WTC11 (cell line): ENCODE measurements at regions of chr2 and their contacts with region 1.

Region 1: DNA sequence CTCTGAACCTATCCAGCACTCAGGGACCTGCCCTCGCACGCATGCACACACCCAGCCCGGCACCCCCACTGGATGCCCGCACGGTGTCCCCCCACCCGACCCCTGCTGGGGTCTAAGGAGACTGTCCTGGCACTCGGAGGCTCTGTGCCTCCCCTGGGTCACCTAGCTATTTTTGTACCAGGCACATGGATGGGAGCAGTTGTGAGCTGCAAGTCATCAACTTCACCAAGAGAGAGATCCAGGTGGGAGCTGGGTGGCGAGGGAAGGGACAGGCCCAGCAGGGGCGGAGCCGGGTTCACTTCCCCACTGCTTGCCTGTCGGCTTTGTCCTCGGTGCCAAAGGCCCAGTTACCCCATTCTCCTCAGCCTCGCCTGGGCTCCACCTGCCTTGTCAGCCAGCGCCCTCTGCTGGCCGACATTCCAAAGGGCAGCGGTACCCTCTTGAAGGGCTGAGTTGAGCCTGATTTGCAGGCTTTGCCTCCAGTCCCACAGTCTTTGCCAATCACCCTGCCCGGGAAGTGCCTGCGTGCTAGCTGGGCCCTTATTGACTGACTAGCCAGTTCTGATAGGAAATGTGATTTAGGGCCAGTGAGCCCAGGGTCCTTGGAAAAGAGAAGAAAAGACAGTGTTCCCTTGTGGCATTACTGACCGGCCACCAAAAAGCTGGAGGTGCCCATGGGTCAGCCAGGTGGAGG is 5.8 kb downstream of the NT5DC4 start:
- DNase-seq: peak; percentile 95
- ATAC-seq: peak; percentile 93
- H3K4me3 Mint-ChIP-seq: no peak overlapping the region
- H3K27ac Mint-ChIP-seq: no peak overlapping the region
- H3K4me1 Mint-ChIP-seq: peaks cover 8% of the 10 kb centered on the region; the same call in 1 of the 2 replicates
- H3K27me3 Mint-ChIP-seq: no peaks in the 10 kb centered on the region
- CTCF ChIP-seq: peak; percentile 87

Region 2: GRCh38 chr2:112584134-112584890 is 142.3 kb before region 1 on chr2 and contains the start of gene CHCHD5:
- CTCF ChIA-PET with region 1: interaction called, 18 read pairs
- POLR2A ChIA-PET with region 1: no interaction called
- DNase-seq: peak; percentile 90
- ATAC-seq: peak; percentile 88
- H3K4me3 Mint-ChIP-seq: peak within 1 kb of the TSS; percentile 89
- H3K27ac Mint-ChIP-seq: peak within 1 kb of the TSS; percentile 99
- H3K4me1 Mint-ChIP-seq: peaks cover 13% of the 10 kb centered on the region
- H3K27me3 Mint-ChIP-seq: no peaks in the 10 kb centered on the region
- CTCF ChIP-seq: no peak
- total RNA-seq, gene CHCHD5: 33.2 to 36.5 TPM (median 33.7 TPM) in 3 replicates

Region 3: GRCh38 chr2:112614201-112614840 is 112.3 kb before region 1 on chr2:
- CTCF ChIA-PET with region 1: interaction called, 16 read pairs
- POLR2A ChIA-PET with region 1: no interaction called
- DNase-seq: peak; percentile 63
- ATAC-seq: peak; percentile 98
- H3K4me3 Mint-ChIP-seq: peak overlapping the region; percentile 33; the same call in 1 of the 2 replicates
- H3K27ac Mint-ChIP-seq: no peak overlapping the region
- H3K4me1 Mint-ChIP-seq: peaks cover 22% of the 10 kb centered on the region
- H3K27me3 Mint-ChIP-seq: peaks cover 19% of the 10 kb centered on the region
- CTCF ChIP-seq: no peak

Region 4: DNA sequence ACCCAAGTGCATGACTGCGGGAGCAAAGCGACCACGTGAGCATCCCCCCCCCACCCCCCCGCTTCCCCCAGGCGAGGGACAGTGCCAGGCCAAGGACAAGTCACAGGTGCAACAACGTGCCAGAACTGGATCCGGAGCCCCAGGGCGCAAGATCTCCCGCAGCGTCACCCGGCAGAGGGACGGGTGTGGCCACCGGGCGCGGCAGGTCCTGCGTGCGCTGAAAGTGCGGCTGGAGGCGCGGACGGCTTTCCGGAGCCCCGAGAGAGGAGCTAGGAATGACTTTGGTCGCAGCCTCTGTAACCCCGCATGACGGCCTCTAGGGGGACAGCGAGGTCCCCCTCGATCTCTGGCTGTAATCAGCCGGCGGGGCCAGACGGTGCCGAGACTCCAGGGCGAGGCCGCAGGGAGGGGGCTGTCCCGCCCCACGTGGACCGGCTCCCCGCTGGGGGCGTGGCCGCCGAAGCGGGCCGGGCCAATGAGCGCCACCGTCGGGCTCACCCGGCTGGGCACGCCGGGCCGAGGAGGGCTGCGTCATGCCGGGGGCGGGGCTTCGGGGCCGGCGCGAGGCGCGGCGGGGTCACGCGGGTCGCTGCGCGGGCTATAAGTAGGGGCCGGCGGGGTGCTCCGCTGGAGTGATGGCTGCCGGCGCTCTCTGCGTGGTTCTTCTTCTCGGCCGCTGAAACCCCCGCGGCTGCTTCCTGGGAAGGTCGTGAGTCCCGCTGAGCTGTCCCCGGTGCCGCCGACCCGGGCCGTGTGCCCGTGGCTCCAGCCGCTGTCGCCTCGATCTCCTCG is 81.1 kb before region 1 on chr2 and contains the start of gene SLC20A1:
- CTCF ChIA-PET with region 1: interaction called, 38 read pairs
- POLR2A ChIA-PET with region 1: interaction called, 3 read pairs
- DNase-seq: peak; percentile 96
- ATAC-seq: peak; percentile 95
- H3K4me3 Mint-ChIP-seq: peak within 1 kb of the TSS; percentile 84
- H3K27ac Mint-ChIP-seq: peak within 1 kb of the TSS; percentile 87
- H3K4me1 Mint-ChIP-seq: peaks cover 30% of the 10 kb centered on the region
- H3K27me3 Mint-ChIP-seq: peaks cover 17% of the 10 kb centered on the region
- CTCF ChIP-seq: peak; percentile 73
- total RNA-seq, gene SLC20A1: 59.9 to 64.4 TPM (median 60.1 TPM) in 3 replicates

Region 5: DNA sequence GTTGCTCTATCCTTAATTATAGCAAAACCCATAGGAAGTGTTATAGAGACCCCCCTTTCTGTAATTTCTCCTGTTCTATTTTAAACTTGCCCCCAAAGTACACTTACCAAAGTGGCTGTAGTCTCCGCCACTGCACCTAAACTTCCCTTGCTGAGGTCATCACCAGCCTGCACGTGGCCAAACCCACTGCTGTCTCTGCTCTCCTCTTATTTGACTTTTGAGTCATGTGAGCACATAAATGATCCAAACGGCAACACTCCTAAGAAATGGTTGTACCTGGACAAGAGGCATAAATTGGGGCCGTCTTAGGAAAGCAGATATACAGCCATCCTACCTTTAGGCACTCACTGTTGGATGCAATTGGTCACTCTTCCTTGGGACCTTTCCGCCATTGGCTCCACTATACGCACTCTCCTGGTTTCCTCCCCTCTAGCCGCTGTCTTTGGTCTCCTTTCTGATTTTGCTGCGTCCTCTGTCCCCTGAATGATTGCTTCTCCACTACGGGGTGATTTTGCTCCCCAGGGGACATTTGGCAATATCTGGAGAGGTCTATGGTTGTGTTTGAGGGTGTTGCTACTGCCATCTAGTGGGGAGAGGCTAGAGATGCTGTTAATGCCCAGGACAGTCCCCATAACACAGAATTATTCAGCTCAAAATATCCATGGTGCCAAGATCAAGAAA is 231.9 kb after region 1 on chr2:
- CTCF ChIA-PET with region 1: interaction called, 14 read pairs
- POLR2A ChIA-PET with region 1: no interaction called
- DNase-seq: peak; percentile 21
- ATAC-seq: peak; percentile 83
- H3K4me3 Mint-ChIP-seq: no peak overlapping the region
- H3K27ac Mint-ChIP-seq: no peak overlapping the region
- H3K4me1 Mint-ChIP-seq: peaks cover 8% of the 10 kb centered on the region; the same call in 1 of the 2 replicates
- H3K27me3 Mint-ChIP-seq: peaks cover 8% of the 10 kb centered on the region
- CTCF ChIP-seq: peak; percentile 73

Region 6: DNA sequence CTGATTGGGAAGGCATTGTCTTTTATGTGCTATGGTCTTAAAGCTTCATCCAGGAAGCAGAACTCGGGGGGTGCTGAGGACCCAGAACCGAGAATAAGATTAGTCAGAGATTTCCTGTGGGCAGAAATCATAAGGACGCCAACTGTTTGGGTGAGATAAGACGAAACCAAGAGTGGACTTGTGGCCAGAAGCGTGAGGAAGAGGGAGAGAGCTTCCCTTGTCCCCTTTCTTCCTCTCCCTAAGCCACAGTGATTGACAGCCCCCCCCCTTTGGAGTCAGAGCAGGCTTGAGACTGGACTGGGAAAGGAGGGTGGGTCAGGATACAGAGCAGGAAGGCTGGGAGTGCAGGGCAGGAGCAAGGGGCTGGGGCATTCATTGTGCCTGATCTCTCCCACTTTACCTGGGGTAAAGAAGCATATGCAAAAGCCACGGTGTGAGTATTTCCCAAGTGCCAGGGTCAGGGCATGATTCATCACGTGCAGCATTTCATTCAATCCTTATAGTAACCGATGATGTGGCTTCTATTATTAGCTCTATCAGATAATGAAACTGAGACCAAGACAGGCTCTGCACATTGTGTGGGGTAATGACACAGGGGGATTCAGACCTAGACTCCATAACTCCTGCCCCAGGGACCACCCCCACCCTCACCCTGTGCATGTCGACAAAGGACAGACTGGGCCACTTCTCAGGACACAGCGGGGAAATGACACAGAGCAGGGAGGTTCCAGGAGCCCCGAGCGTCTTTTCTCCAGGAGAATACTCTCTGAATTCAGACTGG is 397.7 kb after region 1 on chr2:
- CTCF ChIA-PET with region 1: no interaction called
- POLR2A ChIA-PET with region 1: no interaction called
- DNase-seq: no peak
- ATAC-seq: no peak
- H3K4me3 Mint-ChIP-seq: no peak overlapping the region
- H3K27ac Mint-ChIP-seq: no peak overlapping the region
- H3K4me1 Mint-ChIP-seq: no peaks in the 10 kb centered on the region
- H3K27me3 Mint-ChIP-seq: peaks cover 27% of the 10 kb centered on the region
- CTCF ChIP-seq: no peak